ENCODE measurements at regions of chr19 and their contacts with region 1.

Region 1: GRCh38 chr19:17448131-17448967 is at the start of gene TMEM221:
- DNase-seq: no peak
- H3K4me3 ChIP-seq: peak within 1 kb of the TSS; percentile 51 to 62 (median 56)
- H3K27ac ChIP-seq: no peak within 1 kb of the TSS
- H3K4me1 ChIP-seq: peaks cover 6 to 15% (median 14%) of the 10 kb centered on the region in 4 donors
- H3K27me3 ChIP-seq: peaks cover 0 to 11% (median 0%) of the 10 kb centered on the region in 4 donors
- CTCF ChIP-seq: peak; percentile 19 to 55 (median 47)
- EP300 ChIP-seq: no peak
- POLR2A ChIP-seq: no peak
- total RNA-seq, gene TMEM221: 0.26 to 0.75 TPM in 2 of 4 donors, not detected in the others

Region 2: DNA sequence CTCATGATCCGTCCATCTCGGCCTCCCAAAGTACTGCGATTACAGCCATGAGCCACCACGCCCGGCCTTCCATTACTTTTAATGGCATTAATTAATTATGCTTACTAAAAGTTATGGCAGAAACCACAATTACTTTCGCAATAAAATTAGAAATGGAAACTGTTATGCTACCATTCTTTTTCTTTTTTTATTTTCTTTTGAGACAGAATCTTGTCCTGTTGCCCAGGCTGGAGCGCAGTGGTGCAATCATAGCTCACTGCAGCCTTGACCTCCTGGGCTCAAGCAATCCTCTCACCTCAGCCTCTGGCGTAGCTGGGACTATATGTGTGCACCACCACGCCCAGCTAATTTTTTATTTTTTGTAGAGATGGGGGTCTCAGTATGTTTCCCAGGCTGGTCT is 38.4 kb before region 1 on chr19:
- intact Hi-C with region 1: loop called (anchors 5 kb)
- DNase-seq: no peak
- H3K4me3 ChIP-seq: no peak overlapping the region
- H3K27ac ChIP-seq: no peak overlapping the region
- H3K4me1 ChIP-seq: peaks cover 5 to 37% (median 31%) of the 10 kb centered on the region in 4 donors
- H3K27me3 ChIP-seq: peaks cover 0 to 8% (median 0%) of the 10 kb centered on the region in 4 donors
- CTCF ChIP-seq: no peak
- EP300 ChIP-seq: no peak
- POLR2A ChIP-seq: no peak

Region 3: DNA sequence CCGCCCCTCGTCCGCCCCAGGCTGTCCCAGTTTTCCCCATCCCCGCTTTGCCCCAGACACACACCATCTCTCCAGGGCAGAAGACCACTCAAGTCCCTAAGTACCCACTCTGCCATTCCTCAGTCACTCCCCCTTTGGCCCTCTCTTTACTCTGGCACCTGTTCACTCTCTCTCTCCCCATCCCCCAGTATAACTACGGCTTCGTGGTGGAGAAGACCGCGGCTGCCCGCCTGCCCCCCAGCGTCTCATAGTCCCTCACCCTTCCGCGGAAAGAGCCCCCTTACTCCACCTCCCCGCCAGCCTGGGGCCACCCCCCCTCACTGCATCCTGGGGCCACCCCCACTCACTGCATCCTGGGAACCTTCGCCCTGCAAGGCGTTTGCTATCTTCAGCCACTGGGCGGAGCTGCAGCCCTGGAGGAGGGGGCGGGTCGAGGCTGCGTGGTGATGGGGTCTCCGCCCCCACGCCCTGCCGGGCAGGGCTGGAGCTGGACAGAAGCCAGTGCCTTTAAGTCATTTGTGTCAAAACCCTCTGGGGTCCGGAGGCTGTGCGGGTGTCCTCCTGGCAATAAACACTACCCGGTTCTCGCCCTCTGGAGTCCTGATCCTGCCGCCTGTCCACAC is 23.5 kb before region 1 on chr19:
- intact Hi-C with region 1: no loop called
- DNase-seq: no peak
- H3K4me3 ChIP-seq: no peak overlapping the region
- H3K27ac ChIP-seq: no peak overlapping the region
- H3K4me1 ChIP-seq: peaks cover 3 to 18% (median 16%) of the 10 kb centered on the region in 4 donors
- H3K27me3 ChIP-seq: no peaks in the 10 kb centered on the region
- CTCF ChIP-seq: peak in 2 of 3 experiments; percentile 21 to 35
- EP300 ChIP-seq: no peak
- POLR2A ChIP-seq: no peak

Region 4: DNA sequence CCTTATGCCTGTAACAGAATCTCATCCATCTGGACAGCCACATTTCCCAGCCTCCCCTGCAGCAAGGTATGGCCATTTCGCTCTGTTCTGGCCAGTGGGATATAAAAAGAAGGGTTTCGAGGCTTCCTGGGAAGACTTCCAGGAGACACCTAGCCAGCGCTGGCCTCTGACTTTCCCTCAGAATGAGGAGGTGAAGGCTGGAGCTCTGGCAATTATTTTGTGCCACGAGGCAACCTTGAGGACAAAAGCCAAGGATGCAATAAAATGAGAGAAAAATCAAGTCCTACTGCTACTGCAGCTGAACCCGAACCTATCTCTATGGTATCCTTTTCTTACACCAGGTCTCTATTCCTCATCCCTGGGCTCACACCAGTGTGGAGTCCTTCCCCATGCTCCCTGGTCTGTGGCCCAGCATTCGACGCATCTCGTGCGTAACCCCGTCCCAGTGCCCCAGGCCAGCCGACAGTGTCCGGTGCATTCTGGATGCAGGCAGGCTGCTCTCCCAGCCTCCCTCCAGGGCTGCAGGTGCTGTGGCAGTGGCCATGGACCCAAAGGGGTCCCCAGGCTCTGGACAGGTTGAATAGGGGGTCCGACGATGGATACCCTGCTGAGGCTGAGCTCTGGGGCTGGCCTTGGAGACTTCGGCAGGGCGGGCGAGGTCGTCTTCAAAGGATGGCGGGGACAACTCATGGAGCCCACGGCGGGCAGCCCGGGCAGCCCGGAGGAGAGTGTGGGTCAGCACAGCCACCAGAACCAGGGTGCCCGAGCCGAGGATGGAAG is 12.1 kb before region 1 on chr19:
- intact Hi-C with region 1: no loop called
- DNase-seq: no peak
- H3K4me3 ChIP-seq: no peak overlapping the region
- H3K27ac ChIP-seq: no peak overlapping the region
- H3K4me1 ChIP-seq: peaks cover 0 to under 1% (median 0%) of the 10 kb centered on the region in 4 donors
- H3K27me3 ChIP-seq: no peaks in the 10 kb centered on the region
- CTCF ChIP-seq: no peak
- EP300 ChIP-seq: no peak
- POLR2A ChIP-seq: no peak

Region 5: GRCh38 chr19:17496337-17496997 is 48.1 kb after region 1 on chr19:
- intact Hi-C with region 1: no loop called
- DNase-seq: no peak
- H3K4me3 ChIP-seq: no peak overlapping the region
- H3K27ac ChIP-seq: peak overlapping the region in 1 of 4 donors; percentile 18
- H3K4me1 ChIP-seq: peaks cover 21 to 43% (median 33%) of the 10 kb centered on the region in 4 donors
- H3K27me3 ChIP-seq: no peaks in the 10 kb centered on the region
- CTCF ChIP-seq: peak; percentile 80 to 92 (median 83)
- EP300 ChIP-seq: no peak
- POLR2A ChIP-seq: no peak

Region 6: GRCh38 chr19:17579661-17580244 is 131.4 kb after region 1 on chr19:
- intact Hi-C with region 1: loop called (anchors 10 kb)
- DNase-seq: no peak
- H3K4me3 ChIP-seq: no peak overlapping the region
- H3K27ac ChIP-seq: no peak overlapping the region
- H3K4me1 ChIP-seq: peaks cover 0 to 6% (median 2%) of the 10 kb centered on the region in 4 donors
- H3K27me3 ChIP-seq: no peaks in the 10 kb centered on the region
- CTCF ChIP-seq: no peak
- EP300 ChIP-seq: no peak
- POLR2A ChIP-seq: no peak